AG04450 (cell line): ENCODE measurements at regions of chr5 and their contacts with region 1.

Region 1: GRCh38 chr5:129767906-129768380 is 20.0 kb downstream of the MINAR2 start:
- DNase-seq: peak; percentile 71
- H3K4me3 ChIP-seq: no peak overlapping the region
- H3K27ac ChIP-seq: peak overlapping the region; percentile 21
- H3K27me3 ChIP-seq: no peaks in the 10 kb centered on the region
- CTCF ChIP-seq: peak; percentile 100

Region 2: DNA sequence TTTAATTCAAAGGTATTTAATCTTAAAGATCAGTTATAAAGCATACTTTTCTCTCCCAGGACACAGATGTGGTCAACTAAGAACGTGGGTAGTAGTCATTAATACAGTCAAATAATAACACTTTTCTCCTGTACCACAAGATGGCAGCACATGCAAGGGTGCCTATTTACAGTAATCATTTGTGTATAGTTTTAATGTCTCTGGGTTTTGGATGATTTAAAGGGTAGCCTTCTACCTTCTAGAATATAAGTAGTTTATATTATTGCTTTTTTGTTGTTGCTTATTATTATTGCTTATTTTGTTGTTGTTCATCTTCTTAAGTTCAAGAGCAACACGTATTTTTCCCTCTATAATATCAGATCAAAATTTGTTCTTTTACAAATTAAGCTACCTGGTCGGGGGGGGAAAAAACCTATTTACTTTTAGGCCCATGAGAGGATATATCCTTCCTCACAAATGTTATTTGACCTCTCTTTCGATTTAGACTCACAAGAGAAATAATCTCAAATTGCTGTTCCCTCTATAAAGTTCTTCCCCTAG is 862.3 kb before region 1 on chr5:
- CTCF ChIA-PET with region 1: interaction called, 16 read pairs
- POLR2A ChIA-PET with region 1: no interaction called
- DNase-seq: peak; percentile 21
- H3K4me3 ChIP-seq: no peak overlapping the region
- H3K27ac ChIP-seq: no peak overlapping the region
- H3K27me3 ChIP-seq: no peaks in the 10 kb centered on the region
- CTCF ChIP-seq: peak; percentile 83

Region 3: GRCh38 chr5:129400322-129400983 is 367.5 kb before region 1 on chr5:
- CTCF ChIA-PET with region 1: interaction called, 15 read pairs
- POLR2A ChIA-PET with region 1: no interaction called
- DNase-seq: no peak
- H3K4me3 ChIP-seq: no peak overlapping the region
- H3K27ac ChIP-seq: no peak overlapping the region
- H3K27me3 ChIP-seq: no peaks in the 10 kb centered on the region
- CTCF ChIP-seq: peak; percentile 26

Region 4: DNA sequence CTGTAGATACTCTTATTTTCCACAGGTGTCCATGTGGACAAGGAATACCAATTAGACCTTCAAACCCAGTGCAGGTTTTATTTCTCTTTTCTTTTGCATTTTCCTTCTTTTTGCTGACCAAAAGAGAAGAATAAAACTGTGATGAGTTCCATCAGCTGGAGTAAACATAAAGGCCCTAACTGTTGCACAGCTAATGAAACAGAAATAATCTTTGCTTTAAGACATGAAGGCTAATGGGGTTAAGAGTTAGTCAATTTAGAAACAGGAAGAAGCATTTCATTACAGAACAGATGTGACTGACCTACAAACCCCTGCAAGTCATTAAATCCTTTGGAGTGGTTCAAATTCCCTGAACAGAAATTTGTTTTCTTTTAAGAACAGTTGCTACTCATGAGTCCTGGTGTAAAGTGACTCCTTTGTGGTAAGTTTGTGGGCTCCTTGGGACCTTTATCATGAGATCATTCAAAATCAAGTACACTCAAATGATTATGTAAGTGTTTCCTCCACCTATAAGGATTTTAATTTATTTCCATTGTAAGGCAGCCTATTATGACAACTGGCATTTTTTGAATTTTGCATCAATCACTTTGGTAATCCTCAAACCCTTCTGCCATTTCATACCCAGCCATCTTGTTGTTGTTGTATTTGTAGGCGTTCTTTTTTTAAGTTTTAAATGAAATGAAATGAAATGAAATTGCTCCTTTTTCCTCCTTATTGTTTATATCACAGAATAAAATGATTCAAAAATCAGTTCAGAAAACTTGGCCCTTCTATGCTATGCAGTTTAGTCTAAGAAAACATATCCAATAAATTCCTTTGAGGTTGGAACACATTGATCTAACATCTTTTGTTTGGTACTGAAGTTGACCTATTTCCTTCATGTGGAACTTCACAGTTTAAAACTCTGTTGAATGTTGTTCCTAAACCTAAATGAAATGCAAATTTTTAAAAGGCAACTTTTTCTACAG is 18.7 kb before region 1 on chr5:
- CTCF ChIA-PET with region 1: interaction called, 10 read pairs
- POLR2A ChIA-PET with region 1: no interaction called
- DNase-seq: no peak
- H3K4me3 ChIP-seq: no peak overlapping the region
- H3K27ac ChIP-seq: no peak overlapping the region
- H3K27me3 ChIP-seq: no peaks in the 10 kb centered on the region
- CTCF ChIP-seq: no peak

Region 5: DNA sequence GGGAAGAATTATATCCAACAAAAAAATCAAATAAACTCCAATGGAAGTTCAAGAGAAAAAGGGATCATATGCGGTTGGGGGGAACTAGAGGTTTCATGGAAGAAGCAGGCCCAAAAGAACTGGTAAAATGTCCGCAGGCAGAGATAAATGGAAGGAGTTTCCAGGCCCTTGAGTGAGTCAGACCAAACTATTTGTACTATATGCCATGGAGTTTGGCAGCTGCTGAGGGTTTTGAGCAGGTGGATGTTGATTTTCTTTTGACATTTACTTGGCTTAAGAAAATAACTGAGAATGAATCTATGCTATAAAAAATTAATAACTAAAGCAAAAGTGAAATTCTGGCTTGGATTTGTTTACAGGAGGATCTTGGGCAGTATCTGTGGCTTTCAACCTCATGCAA is 13.7 kb after region 1 on chr5:
- CTCF ChIA-PET with region 1: interaction called, 11 read pairs
- POLR2A ChIA-PET with region 1: no interaction called
- DNase-seq: no peak
- H3K4me3 ChIP-seq: no peak overlapping the region
- H3K27ac ChIP-seq: no peak overlapping the region
- H3K27me3 ChIP-seq: no peaks in the 10 kb centered on the region
- CTCF ChIP-seq: no peak

Region 6: DNA sequence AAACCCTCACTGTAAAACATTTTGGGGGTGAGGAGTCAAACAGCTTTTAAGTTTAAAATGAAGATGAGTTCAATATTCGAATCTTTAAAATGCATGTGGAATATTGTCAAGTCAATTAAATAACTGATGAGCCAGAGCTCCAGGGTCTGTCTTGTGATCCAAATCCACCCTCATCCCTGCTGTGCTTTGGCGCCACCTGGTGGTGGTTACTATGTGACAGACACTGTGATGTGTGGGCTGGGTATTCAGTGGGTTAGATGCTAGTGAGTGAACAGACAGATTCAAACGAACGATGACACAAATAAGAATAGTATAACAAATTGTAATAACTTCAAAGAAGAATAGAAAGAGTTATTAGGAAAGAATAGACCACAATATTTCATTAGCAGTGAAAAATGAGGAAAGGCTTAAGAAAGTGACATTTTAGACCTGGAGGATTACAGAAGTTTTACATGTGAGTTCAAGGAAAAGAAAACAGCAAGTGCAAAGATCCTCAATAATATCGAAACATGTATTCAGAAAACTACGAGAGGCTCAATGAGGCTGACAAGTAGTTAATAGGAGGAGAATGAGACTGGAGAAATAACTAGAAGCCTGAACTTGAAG is 84.9 kb after region 1 on chr5:
- CTCF ChIA-PET with region 1: interaction called, 85 read pairs
- POLR2A ChIA-PET with region 1: no interaction called
- DNase-seq: peak; percentile 26
- H3K4me3 ChIP-seq: no peak overlapping the region
- H3K27ac ChIP-seq: no peak overlapping the region
- H3K27me3 ChIP-seq: no peaks in the 10 kb centered on the region
- CTCF ChIP-seq: peak; percentile 97

Region 7: DNA sequence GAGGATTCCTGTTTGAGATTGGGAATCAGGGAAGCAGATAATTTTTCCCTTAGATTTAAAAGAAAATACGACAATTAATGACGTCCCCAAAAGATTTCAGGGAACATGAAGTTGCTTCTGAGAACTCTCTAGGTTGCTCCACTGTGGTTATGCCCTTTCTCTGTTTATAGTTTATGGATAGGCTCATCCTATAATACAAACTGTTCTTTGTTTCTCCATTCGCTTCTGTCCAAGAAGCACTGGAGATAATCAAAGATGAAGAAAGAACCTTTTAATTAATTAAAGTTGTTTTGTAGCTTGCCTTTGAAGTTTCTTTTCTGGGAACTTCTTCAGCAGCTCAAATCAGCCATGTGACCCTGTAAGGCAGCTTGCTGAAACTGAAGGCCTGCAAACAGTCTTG is 223.8 kb after region 1 on chr5:
- CTCF ChIA-PET with region 1: no interaction called
- POLR2A ChIA-PET with region 1: no interaction called
- DNase-seq: no peak
- H3K4me3 ChIP-seq: no peak overlapping the region
- H3K27ac ChIP-seq: no peak overlapping the region
- H3K27me3 ChIP-seq: no peaks in the 10 kb centered on the region
- CTCF ChIP-seq: no peak

Region 8: GRCh38 chr5:130141659-130142320 is 373.8 kb after region 1 on chr5:
- CTCF ChIA-PET with region 1: interaction called, 42 read pairs
- POLR2A ChIA-PET with region 1: no interaction called
- DNase-seq: peak; percentile 10
- H3K4me3 ChIP-seq: no peak overlapping the region
- H3K27ac ChIP-seq: no peak overlapping the region
- H3K27me3 ChIP-seq: no peaks in the 10 kb centered on the region
- CTCF ChIP-seq: peak; percentile 88